ENCODE measurements at regions of chr5 and their contacts with region 1.

Region 1: DNA sequence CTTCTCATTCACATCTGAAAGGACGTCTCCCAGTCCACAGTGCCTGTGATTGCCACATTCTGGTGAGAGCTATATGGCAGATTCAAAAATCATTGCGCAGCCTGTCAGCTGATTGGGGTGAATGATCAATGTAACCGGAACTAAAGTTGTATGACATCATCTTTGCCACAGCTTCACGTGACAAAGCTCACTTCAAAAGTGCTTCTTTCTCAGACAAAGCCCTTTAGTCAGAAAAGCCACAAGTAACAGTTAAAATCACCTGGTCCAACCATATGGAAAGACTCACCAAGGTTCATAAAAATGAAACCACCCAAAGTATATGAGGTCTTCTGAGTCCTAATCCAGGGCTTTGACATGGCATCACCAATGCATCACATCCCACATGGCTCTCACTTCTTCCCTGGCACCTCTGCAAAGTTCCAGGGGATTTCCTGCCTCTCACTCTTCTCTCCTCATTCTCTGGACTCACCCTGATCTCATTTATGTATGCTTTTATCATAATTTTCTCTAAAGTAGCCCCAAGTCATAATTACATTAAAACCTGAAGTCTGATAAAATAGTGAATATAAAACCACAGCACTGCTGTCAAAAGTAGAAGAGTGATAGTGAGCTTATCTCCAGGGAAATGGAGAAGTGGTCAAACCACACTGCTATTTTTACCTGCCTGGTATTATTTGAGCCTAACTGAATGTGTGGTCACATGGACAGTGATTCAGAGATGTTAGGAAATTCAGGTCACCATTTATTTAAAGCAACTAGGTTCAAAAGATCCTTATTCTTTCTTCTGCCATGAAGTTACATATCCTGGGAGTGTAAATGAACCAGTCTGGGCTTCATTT is 193.1 kb upstream of the PTGER4 start:
- DNase-seq: peak; percentile 86
- ATAC-seq: peak; percentile 77
- H3K4me3 Mint-ChIP-seq: peak overlapping the region; percentile 41
- H3K27ac Mint-ChIP-seq: peak overlapping the region; percentile 98
- H3K4me1 Mint-ChIP-seq: peaks cover 81% of the 10 kb centered on the region
- H3K27me3 Mint-ChIP-seq: no peaks in the 10 kb centered on the region
- CTCF ChIP-seq: no peak

Region 2: DNA sequence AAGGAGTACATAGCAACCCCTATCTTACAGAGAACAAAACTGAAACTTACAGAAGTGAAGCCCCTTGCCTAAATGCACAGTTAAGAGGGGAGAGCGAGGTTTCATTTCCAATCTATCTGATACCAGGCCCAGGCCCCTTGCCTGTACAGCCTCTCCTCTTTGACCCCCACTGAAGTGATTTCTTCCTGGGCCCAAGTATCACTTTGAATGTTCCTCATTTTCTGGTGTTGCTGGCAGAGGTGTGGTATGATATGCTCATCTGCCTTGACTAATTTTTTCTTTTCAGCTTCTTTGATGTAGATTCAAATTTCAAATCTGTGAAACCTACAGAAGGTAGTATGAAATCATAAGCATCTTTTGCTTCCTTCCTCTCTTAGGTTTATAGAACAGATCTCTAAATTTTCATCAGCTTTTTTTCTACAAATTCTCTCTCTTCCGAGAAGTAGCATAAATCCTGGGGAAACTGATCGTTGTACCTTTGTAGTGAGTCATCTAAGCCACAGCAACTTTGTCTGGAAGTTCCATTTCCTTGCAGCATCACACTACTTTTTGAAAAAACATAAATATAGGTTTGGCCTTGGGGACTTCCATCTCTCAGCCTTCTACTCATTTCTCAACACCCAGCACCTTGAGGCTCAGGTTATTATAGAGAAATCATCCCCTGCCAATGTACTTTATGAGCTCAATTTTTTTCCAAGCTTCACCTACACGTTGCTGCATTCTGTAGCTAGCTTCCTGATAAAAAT is 209.3 kb before region 1 on chr5:
- CTCF ChIA-PET with region 1: interaction called, 3 read pairs
- POLR2A ChIA-PET with region 1: interaction called, 3 read pairs
- intact Hi-C with region 1: loop called (anchors 2 kb)
- DNase-seq: peak; percentile 64
- ATAC-seq: peak; percentile 91
- H3K4me3 Mint-ChIP-seq: peak overlapping the region; percentile 28
- H3K27ac Mint-ChIP-seq: peak overlapping the region; percentile 97
- H3K4me1 Mint-ChIP-seq: peaks cover 45% of the 10 kb centered on the region
- H3K27me3 Mint-ChIP-seq: no peaks in the 10 kb centered on the region
- CTCF ChIP-seq: no peak

Region 3: DNA sequence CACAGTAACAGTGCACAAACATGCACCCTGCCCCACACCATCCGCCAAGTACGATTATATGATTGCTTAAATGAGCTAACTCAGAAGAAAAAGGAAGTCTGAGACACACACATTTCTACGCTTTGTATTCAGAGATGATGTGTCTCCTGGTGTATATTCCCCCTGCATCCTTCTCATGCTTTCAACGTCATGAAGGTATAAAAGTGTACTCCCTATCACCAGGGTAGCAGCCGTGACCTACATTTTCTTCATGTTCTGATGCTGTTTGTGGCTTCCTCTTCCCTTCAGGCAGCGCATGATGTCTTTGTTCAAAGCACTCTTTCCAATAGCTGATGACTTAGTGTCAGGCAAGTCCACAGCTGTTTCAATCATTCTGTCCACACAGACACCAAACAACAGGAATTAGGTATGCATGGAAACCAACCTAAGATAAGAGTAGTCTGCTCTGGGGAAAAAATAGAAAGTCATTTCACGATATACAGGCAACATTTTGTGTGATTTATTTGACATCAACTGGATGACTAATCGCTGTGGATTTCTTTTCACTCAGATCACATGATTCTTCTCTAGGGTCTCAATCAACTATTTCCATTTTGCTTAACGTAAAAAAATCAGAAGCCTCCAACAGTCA is 76.3 kb before region 1 on chr5:
- CTCF ChIA-PET with region 1: interaction called, 3 read pairs
- POLR2A ChIA-PET with region 1: interaction called, 5 read pairs
- intact Hi-C with region 1: loop called (anchors 1 kb)
- DNase-seq: peak; percentile 80
- ATAC-seq: peak; percentile 83
- H3K4me3 Mint-ChIP-seq: peak overlapping the region; percentile 62
- H3K27ac Mint-ChIP-seq: peak overlapping the region; percentile 93
- H3K4me1 Mint-ChIP-seq: peaks cover 63% of the 10 kb centered on the region
- H3K27me3 Mint-ChIP-seq: no peaks in the 10 kb centered on the region
- CTCF ChIP-seq: no peak

Region 4: DNA sequence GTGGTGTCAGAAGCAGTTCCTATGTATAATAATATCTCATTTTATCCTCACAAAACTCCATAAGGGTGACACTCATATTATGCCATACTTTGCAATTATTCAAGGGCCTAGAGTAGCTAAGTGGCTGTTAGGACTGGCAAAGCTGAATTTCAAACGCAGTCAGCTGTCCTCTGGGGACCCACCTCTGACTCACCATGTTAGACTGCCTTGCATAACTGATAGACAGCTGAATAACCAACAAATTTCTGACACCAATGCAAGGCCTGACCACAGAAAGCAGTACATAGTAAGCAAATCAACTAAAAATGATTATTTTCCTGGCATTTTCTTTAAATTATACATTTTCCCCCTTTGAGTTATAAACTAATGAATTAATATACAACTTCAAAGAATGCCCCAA is 58.5 kb before region 1 on chr5:
- CTCF ChIA-PET with region 1: no interaction called
- POLR2A ChIA-PET with region 1: no interaction called
- intact Hi-C with region 1: no loop called
- DNase-seq: peak; percentile 51
- ATAC-seq: peak; percentile 69
- H3K4me3 Mint-ChIP-seq: no peak overlapping the region
- H3K27ac Mint-ChIP-seq: no peak overlapping the region
- H3K4me1 Mint-ChIP-seq: peaks cover 41% of the 10 kb centered on the region
- H3K27me3 Mint-ChIP-seq: no peaks in the 10 kb centered on the region
- CTCF ChIP-seq: no peak

Region 5: GRCh38 chr5:40578501-40579451 is 92.1 kb after region 1 on chr5:
- CTCF ChIA-PET with region 1: no interaction called
- POLR2A ChIA-PET with region 1: no interaction called
- intact Hi-C with region 1: loop called (anchors 5 kb)
- DNase-seq: peak; percentile 84
- ATAC-seq: peak; percentile 90
- H3K4me3 Mint-ChIP-seq: peak overlapping the region; percentile 64
- H3K27ac Mint-ChIP-seq: peak overlapping the region; percentile 84
- H3K4me1 Mint-ChIP-seq: peaks cover 38% of the 10 kb centered on the region
- H3K27me3 Mint-ChIP-seq: no peaks in the 10 kb centered on the region
- CTCF ChIP-seq: no peak

Region 6: GRCh38 chr5:40646286-40646685 is 159.6 kb after region 1 on chr5:
- CTCF ChIA-PET with region 1: no interaction called
- POLR2A ChIA-PET with region 1: no interaction called
- intact Hi-C with region 1: no loop called
- DNase-seq: no peak
- ATAC-seq: no peak
- H3K4me3 Mint-ChIP-seq: no peak overlapping the region
- H3K27ac Mint-ChIP-seq: no peak overlapping the region
- H3K4me1 Mint-ChIP-seq: peaks cover 38% of the 10 kb centered on the region
- H3K27me3 Mint-ChIP-seq: no peaks in the 10 kb centered on the region
- CTCF ChIP-seq: no peak

Region 7: GRCh38 chr5:40688127-40688761 is 201.6 kb after region 1 on chr5:
- CTCF ChIA-PET with region 1: interaction called, 4 read pairs
- POLR2A ChIA-PET with region 1: interaction called, 15 read pairs
- intact Hi-C with region 1: loop called (anchors 2 kb)
- DNase-seq: peak; percentile 95
- ATAC-seq: peak; percentile 70
- H3K4me3 Mint-ChIP-seq: peak overlapping the region; percentile 99
- H3K27ac Mint-ChIP-seq: peak overlapping the region; percentile 88
- H3K4me1 Mint-ChIP-seq: peaks cover 62% of the 10 kb centered on the region
- H3K27me3 Mint-ChIP-seq: no peaks in the 10 kb centered on the region
- CTCF ChIP-seq: peak; percentile 81

Measured in activated CD8-positive, alpha-beta T cell treated with anti-CD3 and anti-CD28 coated beads for 36 hours (primary cell).